ENCODE measurements at regions of chr7 and their contacts with region 1.

Region 1: DNA sequence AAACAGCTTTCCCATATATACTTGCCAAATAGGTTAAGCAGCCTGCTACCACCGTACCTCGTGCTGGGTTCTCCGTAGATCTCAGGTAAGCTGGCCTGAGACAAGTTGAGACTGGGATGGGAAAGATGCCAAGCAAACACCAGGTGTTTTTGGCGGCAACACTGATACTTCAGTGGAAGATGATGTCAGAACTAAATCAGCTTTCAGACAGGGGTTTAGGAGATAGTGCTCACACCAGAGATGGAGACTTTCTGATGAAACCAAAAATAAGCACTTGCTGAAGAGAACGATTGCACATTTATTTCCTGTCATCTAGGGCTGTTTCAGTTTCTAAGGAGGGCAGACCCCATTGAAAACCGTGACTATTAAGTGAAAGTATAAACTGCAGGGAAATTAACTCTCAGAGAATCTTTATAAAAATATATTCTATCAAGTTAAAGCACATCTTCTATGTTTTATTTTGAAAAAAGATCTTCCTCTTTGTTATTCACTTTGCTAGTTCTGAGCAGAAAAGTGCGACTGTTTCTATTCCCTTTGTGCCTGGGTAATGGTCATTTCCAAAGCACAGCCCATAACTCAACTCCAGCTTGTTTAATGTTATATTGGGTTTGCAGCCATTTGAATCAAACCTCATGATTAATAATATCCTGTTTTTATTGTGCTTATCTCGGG is 149.9 kb downstream of the CPED1 start:
- DNase-seq: peak; percentile 54
- ATAC-seq: peak; percentile 99
- H3K4me3 ChIP-seq: peak overlapping the region; percentile 50; the same call in 1 of the 2 replicates
- H3K27ac ChIP-seq: no peak overlapping the region
- H3K4me1 ChIP-seq: no peaks in the 10 kb centered on the region
- H3K27me3 ChIP-seq: no peaks in the 10 kb centered on the region
- CTCF ChIP-seq: no peak
- EP300 ChIP-seq: no peak
- POLR2A ChIP-seq: no peak
- RAD21 ChIP-seq: no peak

Region 2: GRCh38 chr7:120218712-120219111 is 919.7 kb before region 1 on chr7:
- CTCF ChIA-PET with region 1: no interaction called
- POLR2A ChIA-PET with region 1: no interaction called
- RAD21 ChIA-PET with region 1: no interaction called
- SMC1A ChIA-PET with region 1: no interaction called
- in situ Hi-C with region 1: no loop called
- intact Hi-C with region 1: no loop called
- DNase-seq: no peak
- ATAC-seq: no peak
- H3K4me3 ChIP-seq: no peak overlapping the region
- H3K27ac ChIP-seq: no peak overlapping the region
- H3K4me1 ChIP-seq: no peaks in the 10 kb centered on the region
- H3K27me3 ChIP-seq: 0 out of 4 replicates have a peak, but pooled peaks cover 0 to 2% of the 10 kb centered on the region in 2 experiments
- CTCF ChIP-seq: no peak
- EP300 ChIP-seq: no peak
- POLR2A ChIP-seq: no peak
- RAD21 ChIP-seq: no peak

Region 3: DNA sequence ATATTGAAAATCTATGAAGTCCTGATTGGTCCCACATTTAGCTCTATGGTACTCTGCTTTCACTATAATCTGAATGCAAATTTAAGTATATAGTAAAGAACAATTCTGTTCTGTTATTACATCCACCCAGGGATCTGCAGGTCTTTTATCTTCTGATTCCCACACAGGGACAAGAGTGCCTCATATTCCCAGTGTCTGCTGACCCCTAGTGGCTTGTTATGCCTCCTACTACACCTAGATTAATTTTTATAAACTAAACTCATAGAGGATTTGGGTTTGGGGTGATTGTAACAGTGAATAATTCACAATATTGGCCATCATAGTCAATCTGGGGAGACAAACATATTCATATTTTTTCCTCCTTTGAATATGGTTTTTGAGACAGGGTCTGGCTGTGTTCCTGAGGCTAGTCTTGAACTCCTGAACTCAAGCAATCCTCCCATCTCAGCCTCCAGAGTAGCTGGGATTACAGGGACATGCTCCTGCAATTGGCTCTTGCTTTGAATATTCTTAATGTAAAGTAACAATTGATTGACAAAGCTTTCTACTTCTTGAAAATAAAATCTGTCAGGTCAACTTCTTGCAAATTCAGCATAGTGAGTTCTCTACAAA is 583.3 kb before region 1 on chr7:
- CTCF ChIA-PET with region 1: no interaction called
- POLR2A ChIA-PET with region 1: no interaction called
- RAD21 ChIA-PET with region 1: no interaction called
- SMC1A ChIA-PET with region 1: no interaction called
- in situ Hi-C with region 1: no loop called
- intact Hi-C with region 1: no loop called
- DNase-seq: peak; percentile 45
- ATAC-seq: peak; percentile 85
- H3K4me3 ChIP-seq: no peak overlapping the region
- H3K27ac ChIP-seq: no peak overlapping the region
- H3K4me1 ChIP-seq: peaks cover 14% of the 10 kb centered on the region
- H3K27me3 ChIP-seq: no peaks in the 10 kb centered on the region
- CTCF ChIP-seq: peak; percentile 66 to 89 (median 69)
- EP300 ChIP-seq: no peak
- POLR2A ChIP-seq: no peak
- RAD21 ChIP-seq: peak; percentile 98

Region 4: DNA sequence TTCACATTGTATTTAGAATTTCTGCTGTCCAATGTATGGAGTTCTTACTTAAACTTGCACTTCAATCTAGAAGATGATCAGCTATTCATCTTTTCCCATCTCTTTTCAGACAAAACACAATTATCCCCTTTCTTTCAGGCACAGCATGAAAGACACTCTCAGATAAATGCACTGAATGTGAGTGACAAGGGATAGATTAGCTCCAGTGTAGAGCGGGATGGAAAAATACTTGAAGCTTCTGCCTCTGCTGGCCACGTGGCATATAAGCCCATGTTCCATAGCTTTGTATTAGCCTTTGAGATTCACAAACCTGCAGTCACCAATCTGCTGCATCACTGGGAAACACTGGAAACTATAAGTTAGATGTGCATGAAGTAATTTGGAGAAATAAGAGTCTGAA is 419.9 kb after region 1 on chr7:
- CTCF ChIA-PET with region 1: interaction called, 3 read pairs
- POLR2A ChIA-PET with region 1: no interaction called
- RAD21 ChIA-PET with region 1: no interaction called
- SMC1A ChIA-PET with region 1: no interaction called
- in situ Hi-C with region 1: loop called (anchors 10 kb)
- intact Hi-C with region 1: no loop called
- DNase-seq: no peak
- ATAC-seq: no peak
- H3K4me3 ChIP-seq: no peak overlapping the region
- H3K27ac ChIP-seq: no peak overlapping the region
- H3K4me1 ChIP-seq: no peaks in the 10 kb centered on the region
- H3K27me3 ChIP-seq: peaks cover 0 to 2% of the 10 kb centered on the region in 2 experiments; a peak in 1 of 4 replicates
- CTCF ChIP-seq: no peak
- EP300 ChIP-seq: no peak
- POLR2A ChIP-seq: no peak
- RAD21 ChIP-seq: no peak